ENCODE measurements at regions of chr4 and their contacts with region 1.

Region 1: GRCh38 chr4:107896158-107897045 is 34.9 kb upstream of the CYP2U1 start:
- DNase-seq: peak; percentile 96
- H3K4me3 Mint-ChIP-seq: peak overlapping the region; percentile 67
- H3K27ac Mint-ChIP-seq: peak overlapping the region; percentile 98
- H3K4me1 Mint-ChIP-seq: peaks cover 55% of the 10 kb centered on the region
- H3K27me3 Mint-ChIP-seq: no peaks in the 10 kb centered on the region
- CTCF ChIP-seq: no peak

Region 2: GRCh38 chr4:107666134-107666533 is 230.3 kb before region 1 on chr4:
- CTCF ChIA-PET with region 1: no interaction called
- POLR2A ChIA-PET with region 1: no interaction called
- intact Hi-C with region 1: no loop called
- DNase-seq: peak; percentile 8
- H3K4me3 Mint-ChIP-seq: no peak overlapping the region
- H3K27ac Mint-ChIP-seq: peak overlapping the region; percentile 19
- H3K4me1 Mint-ChIP-seq: no peaks in the 10 kb centered on the region
- H3K27me3 Mint-ChIP-seq: no peaks in the 10 kb centered on the region
- CTCF ChIP-seq: peak; percentile 22

Region 3: GRCh38 chr4:107719922-107720722 is 176.3 kb before region 1 on chr4 and contains the start of gene PAPSS1:
- CTCF ChIA-PET with region 1: no interaction called
- POLR2A ChIA-PET with region 1: interaction called, 14 read pairs
- intact Hi-C with region 1: no loop called
- DNase-seq: peak; percentile 98
- H3K4me3 Mint-ChIP-seq: peak within 1 kb of the TSS; percentile 82
- H3K27ac Mint-ChIP-seq: peak within 1 kb of the TSS; percentile 89
- H3K4me1 Mint-ChIP-seq: peaks cover 20% of the 10 kb centered on the region
- H3K27me3 Mint-ChIP-seq: no peaks in the 10 kb centered on the region
- CTCF ChIP-seq: no peak
- total RNA-seq, gene PAPSS1: 58.7 and 63.9 TPM in 2 replicates

Region 4: GRCh38 chr4:107757864-107758476 is 138.4 kb before region 1 on chr4:
- CTCF ChIA-PET with region 1: interaction called, 12 read pairs
- POLR2A ChIA-PET with region 1: interaction called, 4 read pairs
- intact Hi-C with region 1: loop called (anchors 5 kb)
- DNase-seq: peak; percentile 36
- H3K4me3 Mint-ChIP-seq: no peak overlapping the region
- H3K27ac Mint-ChIP-seq: no peak overlapping the region
- H3K4me1 Mint-ChIP-seq: no peaks in the 10 kb centered on the region
- H3K27me3 Mint-ChIP-seq: no peaks in the 10 kb centered on the region
- CTCF ChIP-seq: peak; percentile 41

Region 5: GRCh38 chr4:107838861-107839565 is 57.4 kb before region 1 on chr4:
- CTCF ChIA-PET with region 1: interaction called, 3 read pairs
- POLR2A ChIA-PET with region 1: interaction called, 373 read pairs
- intact Hi-C with region 1: loop called (anchors 2 kb)
- DNase-seq: peak; percentile 48
- H3K4me3 Mint-ChIP-seq: no peak overlapping the region
- H3K27ac Mint-ChIP-seq: no peak overlapping the region
- H3K4me1 Mint-ChIP-seq: peaks cover 20% of the 10 kb centered on the region
- H3K27me3 Mint-ChIP-seq: no peaks in the 10 kb centered on the region
- CTCF ChIP-seq: no peak

Region 6: DNA sequence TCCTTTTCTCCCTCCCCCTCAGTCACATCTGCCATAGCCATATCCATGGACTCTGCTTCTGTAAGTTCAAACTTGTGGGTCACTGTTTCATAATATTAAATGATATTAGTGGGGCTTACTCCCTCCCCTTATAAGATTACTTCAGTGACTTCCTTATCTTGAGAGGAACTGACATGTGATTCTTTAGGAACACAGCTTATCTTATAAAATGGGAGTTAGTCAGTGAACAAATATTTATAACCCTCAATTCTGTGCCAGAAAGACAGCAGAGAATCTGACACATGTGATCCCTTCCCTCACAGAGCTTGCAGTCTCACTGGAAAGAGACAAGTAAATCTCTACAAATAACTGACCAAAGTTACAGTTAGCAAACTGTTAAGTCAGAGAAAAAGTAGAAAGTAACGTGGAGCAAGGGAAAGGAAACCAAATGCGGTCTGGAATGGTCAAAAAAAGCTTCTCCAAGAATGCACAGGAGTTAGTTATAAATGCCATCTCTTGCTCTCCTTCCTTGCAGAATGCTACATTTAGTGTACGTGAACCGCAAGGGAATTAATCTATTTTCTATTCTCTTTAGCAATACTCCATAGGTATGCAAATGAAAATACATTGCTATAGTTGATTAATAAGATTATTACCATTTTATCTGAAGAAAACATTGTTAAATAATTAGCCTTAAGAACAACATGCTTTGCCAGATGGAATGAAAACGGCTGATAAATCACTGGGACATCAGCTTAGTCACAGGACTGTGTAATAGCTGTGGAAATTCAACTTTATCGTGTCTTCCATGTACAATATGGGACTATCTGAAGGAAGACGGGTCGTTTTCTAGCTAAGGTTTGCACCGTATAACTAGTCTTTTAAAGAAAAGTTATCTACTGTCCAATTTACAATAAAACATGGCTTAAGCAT is 42.7 kb before region 1 on chr4:
- CTCF ChIA-PET with region 1: no interaction called
- POLR2A ChIA-PET with region 1: interaction called, 12 read pairs
- intact Hi-C with region 1: no loop called
- DNase-seq: no peak
- H3K4me3 Mint-ChIP-seq: no peak overlapping the region
- H3K27ac Mint-ChIP-seq: peak overlapping the region; percentile 88
- H3K4me1 Mint-ChIP-seq: peaks cover 58% of the 10 kb centered on the region
- H3K27me3 Mint-ChIP-seq: no peaks in the 10 kb centered on the region
- CTCF ChIP-seq: no peak

Region 7: DNA sequence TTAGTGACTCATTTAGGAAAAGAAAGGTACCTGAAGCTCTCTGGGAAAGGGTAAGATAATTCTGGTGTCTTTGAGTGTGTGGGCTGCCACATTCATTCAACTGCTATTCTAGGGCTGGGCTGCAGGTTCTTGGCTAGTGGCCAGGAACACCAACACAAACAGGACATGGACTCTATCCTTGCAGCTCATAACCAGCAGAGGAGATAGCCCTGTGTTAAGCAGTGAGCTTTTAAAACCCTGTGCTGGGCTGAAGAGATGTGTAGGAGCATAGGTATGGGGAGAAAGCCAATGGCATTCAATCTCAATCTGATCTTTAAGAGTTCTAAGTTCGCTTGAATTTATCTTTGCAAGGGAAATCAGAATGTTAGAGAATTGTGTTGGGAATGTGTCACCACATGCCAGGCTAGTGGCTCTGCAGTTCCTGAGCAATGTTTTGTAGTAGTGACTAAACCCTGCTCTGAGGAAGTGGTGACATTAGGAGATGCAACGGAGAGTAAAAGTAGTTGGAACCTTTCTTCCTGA is 32.5 kb before region 1 on chr4:
- CTCF ChIA-PET with region 1: interaction called, 6 read pairs
- POLR2A ChIA-PET with region 1: interaction called, 110 read pairs
- intact Hi-C with region 1: loop called (anchors 1 kb)
- DNase-seq: peak; percentile 84
- H3K4me3 Mint-ChIP-seq: no peak overlapping the region
- H3K27ac Mint-ChIP-seq: peak overlapping the region; percentile 98
- H3K4me1 Mint-ChIP-seq: peaks cover 26% of the 10 kb centered on the region
- H3K27me3 Mint-ChIP-seq: no peaks in the 10 kb centered on the region
- CTCF ChIP-seq: no peak

Region 8: GRCh38 chr4:107870916-107871786 is 25.3 kb before region 1 on chr4:
- CTCF ChIA-PET with region 1: interaction called, 4 read pairs
- POLR2A ChIA-PET with region 1: interaction called, 110 read pairs
- intact Hi-C with region 1: no loop called
- DNase-seq: no peak
- H3K4me3 Mint-ChIP-seq: no peak overlapping the region
- H3K27ac Mint-ChIP-seq: peak overlapping the region; percentile 32
- H3K4me1 Mint-ChIP-seq: peaks cover 26% of the 10 kb centered on the region
- H3K27me3 Mint-ChIP-seq: no peaks in the 10 kb centered on the region
- CTCF ChIP-seq: no peak

Region 9: DNA sequence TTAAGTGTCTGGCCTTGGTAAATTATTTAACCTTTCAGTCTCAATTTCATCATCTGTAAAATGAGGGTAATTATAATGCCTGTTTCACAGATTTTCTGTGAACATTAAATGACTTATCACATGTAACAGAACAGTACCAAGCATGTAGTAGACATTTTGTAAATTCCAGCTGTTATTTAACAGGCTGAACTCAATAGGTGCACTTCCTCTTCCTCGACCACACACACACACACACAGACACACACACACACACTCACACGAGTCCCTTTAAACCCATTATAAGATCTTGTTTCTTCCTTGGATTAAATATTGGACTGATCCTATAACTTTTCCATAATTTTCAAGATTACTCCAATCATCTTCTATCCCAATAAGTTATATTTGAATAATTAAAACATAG is 1459.4 kb after region 1 on chr4:
- CTCF ChIA-PET with region 1: no interaction called
- POLR2A ChIA-PET with region 1: no interaction called
- intact Hi-C with region 1: no loop called
- DNase-seq: no peak
- H3K4me3 Mint-ChIP-seq: no peak overlapping the region
- H3K27ac Mint-ChIP-seq: no peak overlapping the region
- H3K4me1 Mint-ChIP-seq: no peaks in the 10 kb centered on the region
- H3K27me3 Mint-ChIP-seq: no peaks in the 10 kb centered on the region
- CTCF ChIP-seq: no peak